CD4-positive, alpha-beta T cell (primary cell): ENCODE measurements at regions of chr6 and their contacts with region 1.

Region 1: DNA sequence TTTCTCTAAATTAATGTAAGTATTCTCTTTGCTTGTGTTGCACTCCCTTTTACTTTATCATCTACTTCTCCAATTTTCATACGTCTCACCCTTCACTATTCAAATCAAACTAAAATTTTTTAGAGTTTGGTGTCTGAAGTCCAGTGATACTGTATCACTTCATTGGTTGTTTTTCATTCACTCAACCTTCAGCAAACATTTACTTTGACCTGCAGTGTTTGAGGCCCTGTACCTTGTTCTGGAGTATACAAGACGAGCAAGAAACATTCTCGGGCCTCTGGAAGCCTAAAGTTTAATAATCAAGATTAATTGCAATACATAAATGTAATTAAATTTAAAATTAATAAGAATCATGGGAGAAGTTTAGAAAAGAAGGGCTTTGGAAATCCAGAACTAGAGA is 64.6 kb downstream of the SCAF8 start:
- DNase-seq: no peak
- ATAC-seq: no peak
- H3K4me3 ChIP-seq: no peak overlapping the region
- H3K4me3 Mint-ChIP-seq: no peak overlapping the region
- H3K27ac ChIP-seq: no peak overlapping the region
- H3K27ac Mint-ChIP-seq: no peak overlapping the region
- H3K4me1 ChIP-seq: no peaks in the 10 kb centered on the region
- H3K4me1 Mint-ChIP-seq: peaks cover 29% of the 10 kb centered on the region
- H3K27me3 ChIP-seq: no peaks in the 10 kb centered on the region
- H3K27me3 Mint-ChIP-seq: no peaks in the 10 kb centered on the region
- CTCF ChIP-seq: no peak

Region 2: GRCh38 chr6:154738551-154738961 is 59.3 kb before region 1 on chr6:
- CTCF ChIA-PET with region 1: no interaction called
- POLR2A ChIA-PET with region 1: no interaction called
- intact Hi-C with region 1: loop called in 1 of 2 experiments (anchors 1 kb)
- DNase-seq: no peak
- ATAC-seq: no peak
- H3K4me3 ChIP-seq: no peak overlapping the region
- H3K4me3 Mint-ChIP-seq: peak overlapping the region; percentile 74
- H3K27ac ChIP-seq: no peak overlapping the region
- H3K27ac Mint-ChIP-seq: no peak overlapping the region
- H3K4me1 ChIP-seq: peaks cover 51% of the 10 kb centered on the region
- H3K4me1 Mint-ChIP-seq: peaks cover 74% of the 10 kb centered on the region
- H3K27me3 ChIP-seq: no peaks in the 10 kb centered on the region
- H3K27me3 Mint-ChIP-seq: no peaks in the 10 kb centered on the region
- CTCF ChIP-seq: no peak

Region 3: GRCh38 chr6:154848580-154848979 is 50.7 kb after region 1 on chr6:
- CTCF ChIA-PET with region 1: no interaction called
- POLR2A ChIA-PET with region 1: no interaction called
- intact Hi-C with region 1: no loop called
- DNase-seq: no peak
- ATAC-seq: no peak
- H3K4me3 ChIP-seq: no peak overlapping the region
- H3K4me3 Mint-ChIP-seq: no peak overlapping the region
- H3K27ac ChIP-seq: no peak overlapping the region
- H3K27ac Mint-ChIP-seq: no peak overlapping the region
- H3K4me1 ChIP-seq: no peaks in the 10 kb centered on the region
- H3K4me1 Mint-ChIP-seq: peaks cover 59% of the 10 kb centered on the region
- H3K27me3 ChIP-seq: no peaks in the 10 kb centered on the region
- H3K27me3 Mint-ChIP-seq: no peaks in the 10 kb centered on the region
- CTCF ChIP-seq: no peak